ENCODE measurements at regions of chr16 and their contacts with region 1.

Region 1: GRCh38 chr16:57300387-57301125 is 16.1 kb upstream of the PLLP start:
- DNase-seq: peak; percentile 99

Region 2: GRCh38 chr16:57413301-57413730 is 112.8 kb after region 1 on chr16:
- in situ Hi-C with region 1: loop called (anchors 10 kb)
- DNase-seq: no peak

Measured in KBM-7 (cell line).